ENCODE measurements at regions of chr15 and their contacts with region 1.

Region 1: GRCh38 chr15:38084289-38084688 is 149.8 kb downstream of the TMCO5A start:
- DNase-seq: peak; percentile 28
- CTCF ChIP-seq: no peak

Region 2: GRCh38 chr15:38068626-38069391 is 15.5 kb before region 1 on chr15:
- CTCF ChIA-PET with region 1: interaction called, 13 read pairs
- POLR2A ChIA-PET with region 1: interaction called, 3 read pairs
- DNase-seq: peak; percentile 50
- CTCF ChIP-seq: no peak